Heart left ventricle (tissue), 16 donors: ENCODE measurements at regions of chr1 and their contacts with region 1.

Region 1: GRCh38 chr1:232630047-232630893 is at the start of gene SIPA1L2:
- DNase-seq: peak; percentile 96 to 98 (median 96)
- ATAC-seq: peak; percentile 92 to 98 (median 96)
- H3K4me3 ChIP-seq: peak within 1 kb of the TSS; percentile 68 to 96 (median 90)
- H3K27ac ChIP-seq: peak within 1 kb of the TSS; percentile 78 to 98 (median 94)
- H3K4me1 ChIP-seq: peaks cover 0 to 50% (median 25%) of the 10 kb centered on the region in 12 donors
- H3K27me3 ChIP-seq: no peaks in the 10 kb centered on the region
- CTCF ChIP-seq: peak in 10 of 12 donors; percentile 30 to 65 (median 52)
- POLR2A ChIP-seq: peak in 1 of 2 donors; percentile 94
- total RNA-seq, gene SIPA1L2: 70.8 to 148 (median 102) TPM

Region 2: GRCh38 chr1:231931846-231932454 is 698.3 kb before region 1 on chr1:
- intact Hi-C with region 1: loop called in 2 of 10 experiments (anchors 10 kb)
- DNase-seq: no peak
- ATAC-seq: no peak
- H3K4me3 ChIP-seq: no peak overlapping the region
- H3K27ac ChIP-seq: no peak overlapping the region
- H3K4me1 ChIP-seq: peaks cover 8 to 80% (median 61%) of the 10 kb centered on the region in 12 donors
- H3K27me3 ChIP-seq: no peaks in the 10 kb centered on the region
- CTCF ChIP-seq: peak; percentile 19 to 54 (median 36)
- POLR2A ChIP-seq: no peak

Region 3: DNA sequence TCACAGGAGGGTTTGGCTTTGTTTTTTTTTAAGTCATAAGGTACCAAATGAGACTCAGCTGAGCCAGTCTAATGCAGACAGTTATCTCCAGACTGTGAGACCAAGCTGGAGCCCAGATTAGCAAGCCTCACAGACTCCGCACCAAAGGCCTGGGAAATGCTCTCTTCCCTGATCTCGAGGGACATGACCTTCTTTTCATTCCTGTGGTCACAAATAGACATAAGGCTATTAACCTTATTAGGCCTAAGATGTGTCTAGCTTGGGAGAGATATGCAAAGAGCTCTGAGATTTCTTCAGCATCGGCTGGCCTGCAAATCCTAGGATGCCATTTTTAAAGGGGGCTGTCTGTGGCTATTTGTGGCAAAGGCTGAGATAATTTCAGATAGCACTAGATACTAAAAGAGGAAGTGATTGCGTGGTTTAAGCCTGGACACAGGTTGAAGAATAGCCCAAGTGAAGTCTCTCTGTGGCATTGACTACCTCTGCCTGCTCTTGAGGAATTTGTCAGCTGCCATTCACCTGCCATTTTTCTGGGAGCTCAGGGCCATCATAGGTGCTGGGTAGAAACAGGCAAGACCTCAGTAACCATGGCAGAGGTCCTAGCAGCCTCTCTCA is 301.7 kb before region 1 on chr1:
- intact Hi-C with region 1: loop called in 2 of 10 experiments (anchors 5 to 10 kb)
- DNase-seq: peak in 1 of 5 donors; percentile 31
- ATAC-seq: peak; percentile 19 to 73 (median 70)
- H3K4me3 ChIP-seq: no peak overlapping the region
- H3K27ac ChIP-seq: peak overlapping the region in 7 of 12 donors; percentile 20 to 73 (median 41)
- H3K4me1 ChIP-seq: peaks cover 0 to 22% (median 13%) of the 10 kb centered on the region in 12 donors
- H3K27me3 ChIP-seq: no peaks in the 10 kb centered on the region
- CTCF ChIP-seq: no peak
- POLR2A ChIP-seq: no peak

Region 4: DNA sequence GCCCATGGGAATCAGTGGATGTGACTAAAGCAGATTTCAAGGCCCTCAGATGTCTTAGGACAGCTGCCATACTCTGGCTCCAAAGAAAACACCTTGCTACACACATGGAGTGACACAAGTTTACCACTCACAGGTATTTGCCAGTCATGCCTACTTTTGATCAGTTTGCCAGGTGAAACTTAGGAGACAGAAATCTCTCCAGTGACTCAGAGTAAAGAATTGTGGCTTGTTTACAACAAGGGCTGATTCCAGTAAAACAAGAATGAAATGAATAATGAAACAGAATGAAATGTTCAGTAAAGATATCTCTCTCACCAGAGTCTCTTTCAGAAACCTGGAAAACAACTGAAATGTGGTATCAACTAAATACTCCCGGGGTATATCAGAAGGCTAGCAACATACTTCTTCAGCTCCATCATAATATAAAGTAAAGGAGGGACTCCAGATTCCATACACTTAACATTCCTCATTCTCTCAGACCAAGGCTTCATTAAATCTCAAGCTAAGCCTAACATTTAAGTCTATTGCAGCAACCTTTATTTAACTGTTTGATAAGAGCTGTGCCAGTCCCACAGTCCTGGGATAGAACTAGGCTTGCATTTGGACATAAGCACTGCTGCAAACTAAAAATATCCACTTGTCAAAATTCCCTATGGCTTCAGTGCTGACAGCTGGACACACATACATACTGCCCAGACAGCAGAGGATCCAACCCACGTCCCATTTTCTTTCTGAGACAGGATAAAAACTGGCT is 143.6 kb before region 1 on chr1:
- intact Hi-C with region 1: loop called in 3 of 10 experiments (anchors 10 kb)
- DNase-seq: no peak
- ATAC-seq: peak; percentile 83 to 92 (median 90)
- H3K4me3 ChIP-seq: no peak overlapping the region
- H3K27ac ChIP-seq: peak overlapping the region; percentile 36 to 84 (median 58)
- H3K4me1 ChIP-seq: peaks cover 0 to 39% (median 24%) of the 10 kb centered on the region in 12 donors
- H3K27me3 ChIP-seq: no peaks in the 10 kb centered on the region
- CTCF ChIP-seq: no peak
- POLR2A ChIP-seq: no peak

Region 5: GRCh38 chr1:232553050-232553754 is 77.1 kb before region 1 on chr1:
- intact Hi-C with region 1: loop called in 5 of 10 experiments (anchors 5 to 10 kb)
- DNase-seq: peak; percentile 81 to 90 (median 88)
- ATAC-seq: peak; percentile 84 to 91 (median 90)
- H3K4me3 ChIP-seq: peak overlapping the region in 3 of 12 donors; percentile 13 to 26 (median 24)
- H3K27ac ChIP-seq: peak overlapping the region; percentile 24 to 80 (median 62)
- H3K4me1 ChIP-seq: peaks cover 3 to 83% (median 56%) of the 10 kb centered on the region in 12 donors
- H3K27me3 ChIP-seq: no peaks in the 10 kb centered on the region
- CTCF ChIP-seq: no peak
- POLR2A ChIP-seq: no peak

Region 6: GRCh38 chr1:232643251-232643650 is 13.0 kb after region 1 on chr1:
- intact Hi-C with region 1: no loop called
- DNase-seq: no peak
- ATAC-seq: no peak
- H3K4me3 ChIP-seq: no peak overlapping the region
- H3K27ac ChIP-seq: no peak overlapping the region
- H3K4me1 ChIP-seq: no peaks in the 10 kb centered on the region
- H3K27me3 ChIP-seq: no peaks in the 10 kb centered on the region
- CTCF ChIP-seq: peak in 1 of 12 donors; percentile 9
- POLR2A ChIP-seq: no peak

Region 7: GRCh38 chr1:232669981-232670747 is 39.9 kb after region 1 on chr1:
- intact Hi-C with region 1: no loop called
- DNase-seq: no peak
- ATAC-seq: no peak
- H3K4me3 ChIP-seq: no peak overlapping the region
- H3K27ac ChIP-seq: no peak overlapping the region
- H3K4me1 ChIP-seq: peaks cover 0 to 12% (median 0%) of the 10 kb centered on the region in 12 donors
- H3K27me3 ChIP-seq: no peaks in the 10 kb centered on the region
- CTCF ChIP-seq: no peak
- POLR2A ChIP-seq: no peak

Region 8: GRCh38 chr1:232950197-232951176 is 320.2 kb after region 1 on chr1 and contains the start of gene NTPCR:
- intact Hi-C with region 1: loop called in 5 of 10 experiments (anchors 2 to 10 kb)
- DNase-seq: peak; percentile 94 to 98 (median 95)
- ATAC-seq: peak; percentile 94 to 98 (median 96)
- H3K4me3 ChIP-seq: peak within 1 kb of the TSS; percentile 40 to 100 (median 88)
- H3K27ac ChIP-seq: peak within 1 kb of the TSS; percentile 70 to 95 (median 88)
- H3K4me1 ChIP-seq: peaks cover 0 to 32% (median 21%) of the 10 kb centered on the region in 12 donors
- H3K27me3 ChIP-seq: peaks cover 0 to 5% (median 0%) of the 10 kb centered on the region in 9 donors
- CTCF ChIP-seq: peak in 7 of 12 donors; percentile 5 to 42 (median 28)
- POLR2A ChIP-seq: peak in 1 of 2 donors; percentile 65
- total RNA-seq, gene NTPCR: 29.6 to 62.9 (median 57.7) TPM